ENCODE measurements at regions of chr2 and their contacts with region 1.

Region 1: GRCh38 chr2:168480354-168480753 is 24.3 kb downstream of the CERS6 start:
- DNase-seq: no peak
- ATAC-seq: no peak
- H3K4me3 ChIP-seq: no peak overlapping the region
- H3K4me3 Mint-ChIP-seq: no peak overlapping the region
- H3K27ac ChIP-seq: no peak overlapping the region
- H3K27ac Mint-ChIP-seq: no peak overlapping the region
- H3K4me1 ChIP-seq: peaks cover 3 to 20% of the 10 kb centered on the region in 2 experiments
- H3K4me1 Mint-ChIP-seq: peaks cover 66 to 75% (median 69%) of the 10 kb centered on the region in 3 donors
- H3K27me3 ChIP-seq: no peaks in the 10 kb centered on the region
- H3K27me3 Mint-ChIP-seq: no peaks in the 10 kb centered on the region

Region 2: DNA sequence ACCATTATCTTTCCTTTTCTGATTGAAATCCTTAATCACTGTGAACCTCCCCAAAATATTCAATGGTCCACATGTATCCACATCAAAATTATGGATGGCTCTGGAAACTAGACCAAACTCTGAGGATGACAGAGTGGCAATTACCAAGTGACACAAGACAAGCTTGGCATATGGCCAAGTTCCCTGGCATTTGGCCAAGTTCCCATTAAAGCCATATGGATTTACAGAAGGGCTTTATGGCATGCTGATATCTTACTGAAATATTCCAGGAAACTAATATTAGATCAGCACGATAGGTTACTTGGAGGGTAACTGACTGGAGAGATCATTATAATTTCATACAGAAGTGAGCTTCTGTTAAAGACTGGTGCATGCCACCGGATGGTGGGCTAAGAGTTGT is 46.2 kb before region 1 on chr2:
- CTCF ChIA-PET with region 1: no interaction called
- POLR2A ChIA-PET with region 1: no interaction called
- DNase-seq: peak in 1 of 35 experiments; percentile 24
- ATAC-seq: no peak
- H3K4me3 ChIP-seq: no peak overlapping the region
- H3K4me3 Mint-ChIP-seq: no peak overlapping the region
- H3K27ac ChIP-seq: no peak overlapping the region
- H3K27ac Mint-ChIP-seq: peak overlapping the region in 1 of 2 donors; percentile 89
- H3K4me1 ChIP-seq: peaks cover 19 to 41% of the 10 kb centered on the region in 2 experiments
- H3K4me1 Mint-ChIP-seq: peaks cover 59 to 69% (median 63%) of the 10 kb centered on the region in 3 donors
- H3K27me3 ChIP-seq: no peaks in the 10 kb centered on the region
- H3K27me3 Mint-ChIP-seq: no peaks in the 10 kb centered on the region

Region 3: DNA sequence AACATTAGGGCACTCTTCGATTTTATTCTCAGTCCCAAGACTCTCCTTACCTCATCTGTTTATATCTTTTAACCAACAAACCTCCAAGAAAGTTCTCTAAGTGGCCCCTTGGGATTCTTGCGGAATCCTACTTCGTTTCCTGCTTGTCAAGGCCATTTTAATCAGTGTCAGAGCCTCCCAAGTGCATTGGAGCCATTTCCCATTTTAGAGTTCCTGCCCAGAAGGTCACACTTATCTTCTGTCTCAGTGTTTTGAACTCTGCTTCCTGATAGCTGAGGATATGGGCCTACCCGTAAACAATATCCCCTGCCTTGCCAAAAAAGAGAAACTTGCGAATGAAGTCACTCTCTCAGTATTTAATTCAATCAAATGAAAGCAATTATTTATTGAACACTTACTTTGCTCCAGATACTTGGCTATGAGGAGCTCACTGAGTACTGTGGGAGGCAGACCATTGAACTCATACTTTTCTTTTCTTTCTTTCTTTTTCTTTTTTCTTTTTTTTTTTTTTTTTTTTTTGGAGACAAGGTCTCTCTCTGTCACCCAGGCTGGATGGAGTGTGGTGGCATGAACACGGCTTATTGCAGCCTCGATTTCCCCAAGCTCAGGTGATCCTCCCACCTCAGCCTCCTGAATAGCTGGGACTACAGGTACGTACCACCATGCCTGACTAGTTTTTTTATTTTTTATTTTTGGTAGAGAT is 316.4 kb after region 1 on chr2:
- CTCF ChIA-PET with region 1: interaction called in 1 of 2 experiments, 14 read pairs
- POLR2A ChIA-PET with region 1: no interaction called
- DNase-seq: no peak
- ATAC-seq: no peak
- H3K4me3 ChIP-seq: no peak overlapping the region
- H3K4me3 Mint-ChIP-seq: no peak overlapping the region
- H3K27ac ChIP-seq: no peak overlapping the region
- H3K27ac Mint-ChIP-seq: no peak overlapping the region
- H3K4me1 ChIP-seq: no peaks in the 10 kb centered on the region
- H3K4me1 Mint-ChIP-seq: no peaks in the 10 kb centered on the region
- H3K27me3 ChIP-seq: no peaks in the 10 kb centered on the region
- H3K27me3 Mint-ChIP-seq: peaks cover 0 to 4% of the 10 kb centered on the region in 2 donors